Right ventricle myocardium inferior (tissue), 1 donor: ENCODE measurements at regions of chr1 and their contacts with region 1.

Region 1: DNA sequence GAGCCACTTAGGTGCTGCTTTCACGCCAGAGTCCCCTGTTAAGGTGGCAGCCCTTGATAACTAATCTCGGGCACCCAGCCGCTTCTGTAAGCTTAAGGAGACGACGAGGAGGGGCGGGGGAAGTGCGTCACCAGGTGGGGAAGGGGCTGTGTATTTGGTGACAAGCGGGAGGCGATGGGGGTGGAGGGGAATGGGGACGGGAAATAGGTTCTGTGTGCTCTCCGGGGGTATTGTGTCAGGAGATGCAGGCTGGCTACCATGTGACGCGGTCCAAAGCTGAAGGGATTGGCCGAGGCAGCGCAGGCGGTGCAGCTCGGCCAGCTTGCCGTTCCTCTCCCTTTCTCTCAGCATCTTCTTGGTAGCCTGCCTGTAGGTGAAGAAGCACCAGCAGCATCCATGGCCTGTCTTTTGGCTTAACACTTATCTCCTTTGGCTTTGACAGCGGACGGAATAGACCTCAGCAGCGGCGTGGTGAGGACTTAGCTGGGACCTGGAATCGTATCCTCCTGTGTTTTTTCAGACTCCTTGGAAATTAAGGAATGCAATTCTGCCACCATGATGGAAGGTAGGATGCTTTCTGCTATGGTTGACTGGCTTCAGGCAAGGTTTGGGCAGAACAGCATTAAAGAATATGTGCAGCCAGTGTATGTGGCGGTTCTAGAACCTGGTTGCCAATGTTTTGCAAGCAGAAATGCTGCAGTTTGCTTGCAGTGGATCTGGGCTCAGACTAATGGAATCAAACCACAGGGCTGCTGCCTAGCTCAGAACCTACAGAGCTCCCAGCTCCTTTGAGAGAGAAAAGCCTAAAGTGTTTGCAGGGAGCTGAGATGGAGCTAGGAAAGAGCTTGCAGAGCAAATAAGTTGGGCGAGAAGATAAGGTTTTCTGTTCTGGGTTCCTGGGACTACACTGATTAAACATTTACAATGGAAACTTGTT is at the start of gene SGIP1:
- DNase-seq: peak; percentile 52
- ATAC-seq: peak; percentile 90
- total RNA-seq, gene SGIP1: 3.5 TPM

Region 2: GRCh38 chr1:66598670-66599069 is 64.6 kb after region 1 on chr1:
- intact Hi-C with region 1: loop called (anchors 5 kb)
- DNase-seq: no peak
- ATAC-seq: no peak

Region 3: GRCh38 chr1:66809736-66810326 is 275.8 kb after region 1 on chr1:
- intact Hi-C with region 1: no loop called
- DNase-seq: no peak
- ATAC-seq: no peak